ENCODE measurements at regions of chr12 and their contacts with region 1.

Region 1: DNA sequence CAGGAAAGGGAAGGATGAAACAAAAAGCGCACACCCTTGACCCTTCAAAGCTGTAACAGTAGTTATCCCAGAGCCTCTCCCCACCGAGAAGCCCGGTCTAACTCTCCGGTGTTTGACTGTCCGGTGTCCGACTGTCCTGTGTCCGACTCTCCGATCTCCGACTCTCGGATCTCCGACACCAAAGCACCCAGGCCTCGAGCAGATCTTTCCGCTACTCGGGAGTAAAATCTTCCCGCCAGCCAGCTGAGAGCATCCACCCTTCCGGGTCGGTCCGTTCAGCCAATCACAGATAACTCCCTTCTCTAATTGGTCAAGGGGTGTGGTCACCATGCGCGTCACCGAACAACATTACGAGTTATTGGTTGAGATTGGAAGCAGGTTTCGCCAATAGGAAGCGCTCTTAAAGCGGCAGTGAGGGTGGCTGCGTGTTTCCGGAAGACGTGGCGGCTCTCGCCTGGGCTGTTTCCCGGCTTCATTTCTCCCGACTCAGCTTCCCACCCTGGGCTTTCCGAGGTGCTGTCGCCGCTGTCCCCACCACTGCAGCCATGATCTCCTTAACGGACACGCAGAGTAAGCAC is at the starts of genes GOLT1B and RECQL:
- DNase-seq: peak; percentile 97
- H3K4me3 Mint-ChIP-seq: no peak within 1 kb of the TSS
- H3K27ac Mint-ChIP-seq: peak within 1 kb of the TSS; percentile 52
- H3K4me1 Mint-ChIP-seq: peaks cover 36% of the 10 kb centered on the region
- H3K27me3 Mint-ChIP-seq: no peaks in the 10 kb centered on the region
- total RNA-seq, gene GOLT1B: 41.1 and 42.9 TPM in 2 replicates
- total RNA-seq, gene RECQL: 61.9 and 64.9 TPM in 2 replicates

Region 2: GRCh38 chr12:19810213-19810612 is 1691.3 kb before region 1 on chr12:
- intact Hi-C with region 1: no loop called
- DNase-seq: no peak
- H3K4me3 Mint-ChIP-seq: no peak overlapping the region
- H3K27ac Mint-ChIP-seq: no peak overlapping the region
- H3K4me1 Mint-ChIP-seq: no peaks in the 10 kb centered on the region
- H3K27me3 Mint-ChIP-seq: no peaks in the 10 kb centered on the region

Region 3: GRCh38 chr12:20883288-20883687 is 618.2 kb before region 1 on chr12:
- intact Hi-C with region 1: no loop called
- DNase-seq: no peak
- H3K4me3 Mint-ChIP-seq: no peak overlapping the region
- H3K27ac Mint-ChIP-seq: no peak overlapping the region
- H3K4me1 Mint-ChIP-seq: no peaks in the 10 kb centered on the region
- H3K27me3 Mint-ChIP-seq: no peaks in the 10 kb centered on the region

Region 4: GRCh38 chr12:21296751-21297406 is 204.6 kb before region 1 on chr12:
- intact Hi-C with region 1: loop called (anchors 10 kb)
- DNase-seq: peak; percentile 58
- H3K4me3 Mint-ChIP-seq: no peak overlapping the region
- H3K27ac Mint-ChIP-seq: no peak overlapping the region
- H3K4me1 Mint-ChIP-seq: peaks cover 4% of the 10 kb centered on the region
- H3K27me3 Mint-ChIP-seq: peaks cover 11% of the 10 kb centered on the region

Region 5: DNA sequence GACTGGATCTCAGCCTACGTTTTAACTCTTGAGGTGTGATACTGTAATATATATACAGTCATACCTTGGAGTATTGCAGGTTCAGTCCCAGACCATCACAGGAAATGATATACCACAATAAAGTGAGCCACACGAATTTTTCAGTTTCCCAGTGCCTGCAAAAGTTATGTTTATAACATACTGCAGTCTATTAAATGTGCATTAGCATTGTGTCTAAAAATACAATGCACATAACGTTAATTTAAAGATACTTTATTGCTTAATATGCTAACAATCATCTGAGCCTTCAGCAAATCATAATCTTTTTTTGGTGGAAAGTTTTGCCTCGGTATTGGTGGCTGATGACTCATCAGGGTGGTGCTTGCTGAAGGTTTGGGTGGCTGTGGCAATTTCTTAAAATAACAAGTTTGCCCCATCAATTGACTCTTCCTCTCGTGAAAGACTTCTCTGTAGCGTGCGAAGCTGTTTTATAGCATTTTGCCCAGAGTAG is 45.1 kb before region 1 on chr12:
- intact Hi-C with region 1: loop called (anchors 1 kb)
- DNase-seq: peak; percentile 88
- H3K4me3 Mint-ChIP-seq: peak overlapping the region; percentile 59
- H3K27ac Mint-ChIP-seq: peak overlapping the region; percentile 97
- H3K4me1 Mint-ChIP-seq: peaks cover 50% of the 10 kb centered on the region
- H3K27me3 Mint-ChIP-seq: no peaks in the 10 kb centered on the region

Region 6: DNA sequence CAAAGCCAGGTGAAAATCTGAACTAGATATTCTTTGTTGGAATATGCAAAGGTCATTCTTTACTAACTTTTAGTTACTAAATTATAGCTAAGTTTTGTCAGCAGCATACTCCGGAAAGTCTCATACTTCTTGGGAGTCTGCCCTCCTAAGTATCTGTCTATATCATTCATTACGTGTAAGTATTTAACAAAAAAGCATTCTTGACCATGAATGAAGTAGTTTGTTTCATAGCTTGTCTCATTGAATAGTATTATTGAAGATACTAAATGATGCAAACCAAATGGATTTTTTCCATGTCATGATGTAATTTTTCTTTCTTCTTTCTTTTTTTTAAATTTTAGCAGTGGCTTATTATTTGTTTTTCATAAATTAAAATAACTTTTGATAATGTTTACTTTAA is 14.8 kb after region 1 on chr12:
- intact Hi-C with region 1: no loop called
- DNase-seq: no peak
- H3K4me3 Mint-ChIP-seq: no peak overlapping the region
- H3K27ac Mint-ChIP-seq: no peak overlapping the region
- H3K4me1 Mint-ChIP-seq: peaks cover 1% of the 10 kb centered on the region
- H3K27me3 Mint-ChIP-seq: no peaks in the 10 kb centered on the region

Region 7: GRCh38 chr12:21527451-21528180 is 26.1 kb after region 1 on chr12:
- intact Hi-C with region 1: loop called (anchors 2 kb)
- DNase-seq: peak; percentile 90
- H3K4me3 Mint-ChIP-seq: peak overlapping the region; percentile 71
- H3K27ac Mint-ChIP-seq: no peak overlapping the region
- H3K4me1 Mint-ChIP-seq: peaks cover 3% of the 10 kb centered on the region
- H3K27me3 Mint-ChIP-seq: peaks cover 42% of the 10 kb centered on the region

Region 8: DNA sequence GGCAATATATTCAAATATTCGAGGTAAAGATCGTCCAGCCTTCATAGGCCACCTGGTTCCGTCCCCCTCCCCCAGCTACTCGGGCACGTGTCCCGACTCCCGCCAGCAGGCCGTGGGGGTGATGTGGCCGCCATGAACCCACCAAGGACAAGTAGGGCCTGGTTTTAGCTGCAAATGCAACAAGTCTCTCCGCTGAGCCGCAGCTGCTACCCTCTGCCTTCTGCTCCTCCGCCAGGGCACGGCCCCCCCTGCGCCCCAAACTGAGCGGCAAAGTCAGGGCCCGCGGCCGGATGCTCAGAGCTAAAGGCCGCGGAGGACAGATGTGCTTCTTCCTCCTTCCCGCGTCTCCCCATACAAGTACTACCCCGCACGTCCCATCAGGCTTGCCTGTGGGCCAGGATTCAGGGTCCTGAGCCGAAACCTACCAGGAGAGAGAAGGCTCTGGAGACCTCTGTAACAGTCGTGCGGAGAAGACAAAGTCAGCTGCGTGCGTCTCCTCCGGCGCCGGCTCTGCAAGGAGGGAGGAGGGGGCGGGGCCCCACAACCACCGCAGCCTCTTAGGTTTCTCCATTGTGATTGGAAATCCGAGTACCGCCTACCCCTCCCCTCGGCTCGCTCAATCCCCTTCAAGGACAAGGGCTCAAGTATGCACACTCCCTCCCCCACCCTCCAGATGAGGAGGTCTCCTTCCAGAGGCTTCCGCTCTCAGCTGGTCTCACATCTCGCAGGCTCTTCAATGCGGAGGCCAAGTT is 156.0 kb after region 1 on chr12 and contains the start of gene LDHB:
- intact Hi-C with region 1: loop called (anchors 1 kb)
- DNase-seq: peak; percentile 98
- H3K4me3 Mint-ChIP-seq: peak within 1 kb of the TSS; percentile 93
- H3K27ac Mint-ChIP-seq: peak within 1 kb of the TSS; percentile 99
- H3K4me1 Mint-ChIP-seq: peaks cover 37% of the 10 kb centered on the region
- H3K27me3 Mint-ChIP-seq: peaks cover 3% of the 10 kb centered on the region
- total RNA-seq, gene LDHB: 1,574 and 1,607 TPM in 2 replicates

Region 9: DNA sequence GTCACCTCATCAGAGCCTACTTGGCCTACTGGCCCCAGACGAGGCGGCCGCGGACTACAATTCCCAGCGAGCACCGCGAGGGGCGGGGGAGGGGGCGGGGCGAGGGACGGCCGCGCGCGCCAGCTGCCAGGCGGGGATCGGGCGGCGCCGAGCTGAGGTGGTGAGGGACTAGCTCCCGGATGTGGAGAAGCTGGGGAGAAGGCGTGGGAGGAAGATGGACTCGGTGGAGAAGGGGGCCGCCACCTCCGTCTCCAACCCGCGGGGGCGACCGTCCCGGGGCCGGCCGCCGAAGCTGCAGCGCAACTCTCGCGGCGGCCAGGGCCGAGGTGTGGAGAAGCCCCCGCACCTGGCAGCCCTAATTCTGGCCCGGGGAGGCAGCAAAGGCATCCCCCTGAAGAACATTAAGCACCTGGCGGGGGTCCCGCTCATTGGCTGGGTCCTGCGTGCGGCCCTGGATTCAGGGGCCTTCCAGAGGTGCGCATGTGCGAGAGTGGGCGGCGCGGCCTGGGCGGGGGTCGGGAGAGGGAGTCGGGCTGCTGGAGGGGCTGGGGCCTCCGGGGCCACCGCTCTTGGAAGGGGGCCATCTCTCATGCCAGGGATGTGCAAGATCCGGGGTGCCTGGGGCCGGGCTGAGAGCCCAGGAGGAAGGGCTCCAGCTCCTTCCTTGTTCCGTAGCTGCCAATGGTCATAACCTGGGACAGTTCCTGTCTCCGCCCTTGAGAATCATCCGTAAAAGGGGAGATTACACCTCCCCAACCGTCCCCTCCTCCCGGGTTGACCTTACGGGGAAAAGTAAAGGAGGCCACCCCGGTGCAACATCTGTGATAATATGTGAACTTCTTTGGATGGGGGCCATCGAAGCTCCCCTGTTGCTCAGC is 544.9 kb after region 1 on chr12 and contains the start of gene CMAS:
- intact Hi-C with region 1: loop called (anchors 10 kb)
- DNase-seq: peak; percentile 92
- H3K4me3 Mint-ChIP-seq: peak within 1 kb of the TSS; percentile 98
- H3K27ac Mint-ChIP-seq: peak within 1 kb of the TSS; percentile 89
- H3K4me1 Mint-ChIP-seq: peaks cover 34% of the 10 kb centered on the region
- H3K27me3 Mint-ChIP-seq: no peaks in the 10 kb centered on the region
- total RNA-seq, gene CMAS: 32.9 and 36.7 TPM in 2 replicates

Region 10: DNA sequence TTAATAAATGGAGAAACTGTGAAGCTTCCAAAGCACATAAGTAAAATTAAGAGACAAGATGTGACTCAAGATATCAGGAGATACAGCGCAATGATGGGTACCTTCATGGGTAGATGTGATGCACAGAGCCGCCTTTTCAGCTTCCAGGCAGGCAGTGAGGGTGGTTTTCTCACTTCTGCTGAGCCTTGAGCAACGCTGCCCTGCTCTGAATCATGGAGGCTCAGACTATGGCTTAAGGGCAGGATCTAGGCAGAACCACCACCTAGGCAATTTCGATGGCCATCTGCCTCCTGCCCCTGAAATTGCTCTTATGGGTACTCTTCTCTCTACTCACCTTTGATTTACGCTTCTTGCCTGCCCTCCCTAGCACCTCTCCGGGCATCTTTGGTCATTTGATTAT is 1413.1 kb after region 1 on chr12:
- intact Hi-C with region 1: no loop called
- DNase-seq: no peak
- H3K4me3 Mint-ChIP-seq: no peak overlapping the region
- H3K27ac Mint-ChIP-seq: no peak overlapping the region
- H3K4me1 Mint-ChIP-seq: no peaks in the 10 kb centered on the region
- H3K27me3 Mint-ChIP-seq: no peaks in the 10 kb centered on the region